Activated T-helper 2 cell treated with anti-CD3 and anti-CD28 coated beads, Interferon-gamma antibody, Interleukin-2, Interleukin-4, amounts not matched to agents 10 μg/mL and 5 μg/mL and 100 μg/mL, durations not matched to agents 14 hours and 24 hours and 36 hours (primary cell): ENCODE measurements at regions of chr16 and their contacts with region 1.

Region 1: DNA sequence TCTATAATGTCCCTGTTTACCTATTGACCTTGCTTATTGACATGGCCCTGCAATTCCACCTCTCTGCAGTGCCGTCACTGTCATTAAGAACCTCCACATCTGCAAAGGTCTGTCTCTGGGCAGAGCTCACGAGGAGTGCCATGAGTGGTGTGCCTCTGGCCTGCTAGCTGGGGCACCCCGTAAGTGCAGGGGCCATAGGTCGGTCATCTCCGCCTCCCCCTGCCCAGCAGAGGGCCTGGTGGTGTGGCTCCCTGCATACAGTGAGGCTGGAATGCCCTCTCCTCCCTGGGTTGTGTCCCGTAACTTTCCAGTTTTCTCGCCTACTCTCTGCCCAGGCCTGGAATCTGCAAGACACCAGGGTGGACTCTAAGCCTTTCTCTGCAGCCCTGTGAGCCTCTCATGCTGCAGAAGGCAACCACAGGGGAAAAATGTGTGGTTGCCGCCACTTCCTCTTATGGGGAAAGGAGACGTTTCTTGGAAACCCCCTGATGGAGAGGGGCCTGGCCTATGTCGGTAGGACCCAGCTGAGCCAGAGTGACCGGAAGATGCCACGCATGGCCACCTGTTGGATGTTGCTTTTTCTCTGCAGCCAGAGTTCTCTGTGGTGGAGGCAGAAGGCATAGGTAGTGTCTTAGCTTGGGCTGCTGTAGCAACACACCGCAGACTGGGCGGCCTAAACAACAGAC is 2.7 kb upstream of the SNX20 start:
- DNase-seq: peak; percentile 61
- H3K4me3 Mint-ChIP-seq: peak overlapping the region; percentile 45
- H3K27ac Mint-ChIP-seq: peak overlapping the region; percentile 86
- H3K4me1 Mint-ChIP-seq: peaks cover 58% of the 10 kb centered on the region
- H3K27me3 Mint-ChIP-seq: no peaks in the 10 kb centered on the region

Region 2: GRCh38 chr16:50697851-50698767 is 14.3 kb after region 1 on chr16:
- intact Hi-C with region 1: loop called (anchors 1 kb)
- DNase-seq: no peak
- H3K4me3 Mint-ChIP-seq: peak overlapping the region; percentile 70
- H3K27ac Mint-ChIP-seq: peak overlapping the region; percentile 88
- H3K4me1 Mint-ChIP-seq: peaks cover 63% of the 10 kb centered on the region
- H3K27me3 Mint-ChIP-seq: no peaks in the 10 kb centered on the region